ENCODE measurements at regions of chr4 and their contacts with region 1.

Region 1: GRCh38 chr4:39004758-39005157 is 27.5 kb downstream of the TMEM156 start:
- DNase-seq: no peak
- H3K4me3 ChIP-seq: no peak overlapping the region
- H3K27ac ChIP-seq: no peak overlapping the region
- H3K4me1 ChIP-seq: no peaks in the 10 kb centered on the region
- H3K27me3 ChIP-seq: no peaks in the 10 kb centered on the region
- CTCF ChIP-seq: no peak

Region 2: GRCh38 chr4:39025552-39026085 is 20.9 kb after region 1 on chr4:
- CTCF ChIA-PET with region 1: no interaction called
- POLR2A ChIA-PET with region 1: interaction called, 13 read pairs
- intact Hi-C with region 1: loop called (anchors 1 kb)
- DNase-seq: no peak
- H3K4me3 ChIP-seq: 0 out of 2 replicates have a peak overlapping the region, but pooled peaks have one; percentile 18
- H3K27ac ChIP-seq: peak overlapping the region; percentile 52
- H3K4me1 ChIP-seq: peaks cover 30% of the 10 kb centered on the region
- H3K27me3 ChIP-seq: no peaks in the 10 kb centered on the region
- CTCF ChIP-seq: no peak

Measured in PC-9 (cell line).